ENCODE measurements at regions of chr19 and their contacts with region 1.

Region 1: GRCh38 chr19:37906869-37907734 is at the start of gene SIPA1L3:
- DNase-seq: peak; percentile 97
- ATAC-seq: peak; percentile 98
- H3K4me3 Mint-ChIP-seq: peak within 1 kb of the TSS; percentile 73
- H3K27ac Mint-ChIP-seq: peak within 1 kb of the TSS; percentile 74
- H3K4me1 Mint-ChIP-seq: peaks cover 20% of the 10 kb centered on the region
- H3K27me3 Mint-ChIP-seq: no peaks in the 10 kb centered on the region
- total RNA-seq, gene SIPA1L3: 10.5 to 18.3 TPM

Region 2: GRCh38 chr19:37594304-37594981 is 312.7 kb before region 1 on chr19 and contains the starts of genes ZNF540 and ZNF571:
- CTCF ChIA-PET with region 1: no interaction called
- POLR2A ChIA-PET with region 1: no interaction called
- intact Hi-C with region 1: loop called in 1 of 2 experiments (anchors 1 kb)
- DNase-seq: peak; percentile 97
- ATAC-seq: peak; percentile 97
- H3K4me3 Mint-ChIP-seq: peak within 1 kb of the TSS; percentile 94
- H3K27ac Mint-ChIP-seq: peak within 1 kb of the TSS; percentile 99
- H3K4me1 Mint-ChIP-seq: peaks cover 27% of the 10 kb centered on the region
- H3K27me3 Mint-ChIP-seq: no peaks in the 10 kb centered on the region
- total RNA-seq, gene ZNF540: 0.67 to 1.1 TPM
- total RNA-seq, gene ZNF571: 2.4 to 2.9 TPM

Region 3: DNA sequence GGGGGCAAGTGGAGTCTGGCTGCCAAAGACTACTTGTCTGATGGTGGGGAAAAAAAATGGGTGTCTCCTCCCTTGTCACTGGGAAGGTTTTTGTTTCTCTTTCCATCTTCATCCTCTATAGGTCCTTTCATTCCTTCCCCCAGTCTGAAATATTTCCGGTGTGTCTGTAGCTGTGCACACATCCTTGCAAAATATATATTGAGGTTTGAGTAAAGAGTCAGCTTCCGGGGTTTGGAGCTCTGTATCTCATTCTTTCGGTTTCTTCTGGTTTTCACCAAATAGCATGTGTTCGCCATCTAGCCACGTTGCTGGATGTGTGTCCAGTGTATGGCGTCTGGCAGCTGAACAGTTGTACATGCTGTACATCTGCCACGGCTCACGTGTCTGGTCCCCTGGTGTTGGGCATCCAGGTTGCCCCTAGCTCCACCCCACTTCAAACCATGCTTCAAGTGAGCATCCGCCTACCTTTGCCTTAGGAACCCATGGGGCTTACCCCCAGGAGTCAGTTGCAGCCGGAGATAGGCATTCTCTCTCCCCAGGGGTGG is 142.1 kb after region 1 on chr19:
- CTCF ChIA-PET with region 1: interaction called, 9 read pairs
- POLR2A ChIA-PET with region 1: interaction called, 4 read pairs
- intact Hi-C with region 1: loop called (anchors 1 to 5 kb)
- DNase-seq: peak; percentile 73
- ATAC-seq: peak; percentile 91
- H3K4me3 Mint-ChIP-seq: peak overlapping the region; percentile 67
- H3K27ac Mint-ChIP-seq: peak overlapping the region; percentile 97
- H3K4me1 Mint-ChIP-seq: peaks cover 47% of the 10 kb centered on the region
- H3K27me3 Mint-ChIP-seq: no peaks in the 10 kb centered on the region

Region 4: DNA sequence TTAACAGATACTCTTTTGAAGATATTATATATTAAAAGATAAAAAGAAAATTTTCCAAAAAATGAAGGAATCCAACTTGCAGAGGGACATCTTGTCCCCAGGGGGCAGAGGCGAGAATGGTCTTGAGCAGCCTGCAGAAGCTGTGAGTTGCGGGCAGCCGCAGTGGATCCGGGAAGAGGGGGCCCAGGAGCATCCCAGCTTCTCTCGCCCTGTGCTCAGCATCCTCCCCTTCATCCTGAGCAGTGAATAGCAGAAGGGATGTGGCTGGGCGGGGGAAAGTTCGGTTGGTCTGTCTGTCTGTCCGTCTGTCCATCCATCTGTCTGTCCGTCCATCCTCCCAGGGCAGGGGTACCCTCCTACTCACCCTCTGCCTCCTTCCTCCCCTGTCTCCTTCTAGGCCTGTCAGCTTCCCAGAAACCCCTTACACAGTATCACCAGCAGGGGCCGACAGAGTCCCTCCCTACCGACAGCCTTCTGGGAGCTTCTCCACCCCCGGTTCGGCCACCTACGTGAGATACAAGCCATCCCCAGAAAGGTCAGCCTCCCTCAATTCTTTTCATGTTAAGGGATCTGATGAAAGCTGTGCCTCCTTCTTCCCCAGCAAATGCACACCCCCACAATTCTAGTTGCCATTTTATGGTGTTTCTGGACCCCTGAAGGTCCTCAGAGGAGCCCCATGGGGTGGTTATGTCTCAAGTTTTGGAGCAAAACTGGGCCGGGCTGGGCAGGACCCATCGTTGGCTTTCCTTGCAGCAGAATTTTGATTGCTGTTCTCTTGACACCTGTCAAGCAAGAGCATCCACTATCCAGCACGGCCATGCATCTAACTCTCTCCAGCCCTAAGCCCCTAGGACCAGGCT is 235.3 kb after region 1 on chr19:
- CTCF ChIA-PET with region 1: interaction called, 18 read pairs
- POLR2A ChIA-PET with region 1: no interaction called
- intact Hi-C with region 1: loop called in 1 of 2 experiments (anchors 5 kb)
- DNase-seq: peak; percentile 78
- ATAC-seq: peak; percentile 86
- H3K4me3 Mint-ChIP-seq: no peak overlapping the region
- H3K27ac Mint-ChIP-seq: no peak overlapping the region
- H3K4me1 Mint-ChIP-seq: peaks cover 3% of the 10 kb centered on the region
- H3K27me3 Mint-ChIP-seq: no peaks in the 10 kb centered on the region

Region 5: GRCh38 chr19:38263689-38264485 is 356.8 kb after region 1 on chr19:
- CTCF ChIA-PET with region 1: no interaction called
- POLR2A ChIA-PET with region 1: no interaction called
- intact Hi-C with region 1: loop called in 1 of 2 experiments (anchors 1 kb)
- DNase-seq: peak; percentile 90
- ATAC-seq: peak; percentile 87
- H3K4me3 Mint-ChIP-seq: peak overlapping the region; percentile 83
- H3K27ac Mint-ChIP-seq: peak overlapping the region; percentile 94
- H3K4me1 Mint-ChIP-seq: peaks cover 34% of the 10 kb centered on the region
- H3K27me3 Mint-ChIP-seq: no peaks in the 10 kb centered on the region

Region 6: DNA sequence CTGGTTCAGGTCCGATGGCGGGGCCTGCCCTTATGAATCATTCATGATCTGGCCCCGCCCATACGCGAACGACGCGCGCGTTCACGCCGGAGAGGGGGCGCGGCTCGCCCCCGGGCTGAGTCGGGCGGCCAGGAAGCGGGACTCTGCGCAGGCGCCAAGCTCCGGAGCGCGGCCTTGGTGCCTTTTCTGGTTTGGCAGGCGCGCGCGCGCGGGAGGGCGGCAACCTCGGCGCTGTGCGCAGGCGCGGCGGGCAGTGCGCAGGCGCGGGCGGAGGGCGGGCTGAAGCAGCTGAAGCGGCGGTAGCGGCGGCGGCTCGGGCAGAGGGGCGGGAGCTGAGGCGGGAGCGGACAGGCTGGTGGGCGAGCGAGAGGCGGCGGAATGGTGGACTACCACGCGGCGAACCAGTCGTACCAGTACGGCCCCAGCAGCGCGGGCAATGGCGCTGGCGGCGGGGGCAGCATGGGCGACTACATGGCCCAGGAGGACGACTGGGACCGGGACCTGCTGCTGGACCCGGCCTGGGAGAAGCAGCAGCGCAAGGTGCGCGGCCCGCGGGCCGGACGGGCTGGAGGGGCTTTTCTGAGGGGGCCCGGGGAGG is 740.4 kb after region 1 on chr19 and contains the start of gene ACTN4:
- CTCF ChIA-PET with region 1: no interaction called
- POLR2A ChIA-PET with region 1: no interaction called
- intact Hi-C with region 1: loop called in 1 of 2 experiments (anchors 5 kb)
- DNase-seq: peak; percentile 100
- ATAC-seq: peak; percentile 92
- H3K4me3 Mint-ChIP-seq: peak within 1 kb of the TSS; percentile 98
- H3K27ac Mint-ChIP-seq: peak within 1 kb of the TSS; percentile 81
- H3K4me1 Mint-ChIP-seq: peaks cover 39% of the 10 kb centered on the region
- H3K27me3 Mint-ChIP-seq: peaks cover 10% of the 10 kb centered on the region
- total RNA-seq, gene ACTN4: 181 to 182 TPM

Measured in activated CD4-positive, alpha-beta T cell treated with anti-CD3 and anti-CD28 coated beads for 36 hours (primary cell).